Colonic mucosa (tissue), 4 donors: ENCODE measurements at regions of chr7 and their contacts with region 1.

Region 1: DNA sequence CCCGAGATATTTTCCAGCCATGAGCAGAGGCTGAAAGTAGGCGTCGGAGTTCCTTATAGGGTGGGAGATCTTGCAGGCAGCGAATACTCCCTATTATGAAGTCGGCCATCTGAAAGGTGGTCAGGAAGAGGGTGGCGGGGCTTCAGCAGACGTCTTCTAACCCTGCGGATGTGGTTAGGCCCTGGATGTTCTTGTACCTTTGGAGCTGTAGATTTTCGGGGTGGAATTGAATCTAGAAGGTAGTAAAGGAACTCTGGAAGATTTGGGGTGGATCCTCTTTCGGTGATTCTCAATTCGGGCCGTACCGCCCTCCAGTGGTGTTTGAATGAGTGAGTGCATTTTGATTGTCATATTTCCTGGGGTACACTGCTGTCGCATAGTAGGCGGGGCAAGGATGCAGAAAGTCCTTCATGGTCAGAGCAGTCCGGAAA is 635 bp downstream of the NUP205 start:
- DNase-seq: peak; percentile 76
- H3K4me3 ChIP-seq: peak overlapping the region; percentile 77
- H3K27ac ChIP-seq: peak overlapping the region; percentile 67
- H3K4me1 ChIP-seq: no peaks in the 10 kb centered on the region
- H3K27me3 ChIP-seq: no peaks in the 10 kb centered on the region
- CTCF ChIP-seq: peak; percentile 30

Region 2: DNA sequence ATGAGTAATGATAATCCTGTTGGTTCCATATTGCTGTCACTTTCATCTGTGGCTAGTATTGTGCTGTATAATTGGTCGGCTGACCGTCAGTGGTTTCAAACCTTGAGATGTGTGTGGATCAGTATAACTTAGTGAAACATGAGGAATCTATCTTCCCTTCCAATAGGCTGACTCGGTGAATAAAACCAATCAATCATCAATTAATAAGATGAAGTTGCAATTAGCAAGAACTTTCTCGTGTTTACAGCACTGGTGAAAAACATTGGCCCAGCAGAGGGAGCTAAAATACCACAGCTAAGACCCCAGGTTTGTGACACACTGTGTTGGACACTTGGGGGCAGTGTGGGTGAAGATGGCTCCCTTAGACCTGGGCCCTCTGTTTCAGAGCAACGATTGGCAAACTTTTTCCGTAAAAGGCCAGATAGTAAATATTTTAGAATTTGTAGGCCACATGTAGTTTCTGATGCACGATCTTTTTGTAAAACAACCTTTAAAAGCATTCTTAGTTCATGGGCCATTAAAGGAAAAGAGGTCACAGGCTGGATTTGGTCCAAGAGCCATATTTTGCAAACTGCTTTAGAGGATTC is 276.9 kb before region 1 on chr7:
- intact Hi-C with region 1: loop called (anchors 5 kb)
- DNase-seq: peak; percentile 86
- H3K4me3 ChIP-seq: no peak overlapping the region
- H3K27ac ChIP-seq: no peak overlapping the region
- H3K4me1 ChIP-seq: no peaks in the 10 kb centered on the region
- H3K27me3 ChIP-seq: peaks cover 4% of the 10 kb centered on the region
- CTCF ChIP-seq: peak; percentile 86

Region 3: DNA sequence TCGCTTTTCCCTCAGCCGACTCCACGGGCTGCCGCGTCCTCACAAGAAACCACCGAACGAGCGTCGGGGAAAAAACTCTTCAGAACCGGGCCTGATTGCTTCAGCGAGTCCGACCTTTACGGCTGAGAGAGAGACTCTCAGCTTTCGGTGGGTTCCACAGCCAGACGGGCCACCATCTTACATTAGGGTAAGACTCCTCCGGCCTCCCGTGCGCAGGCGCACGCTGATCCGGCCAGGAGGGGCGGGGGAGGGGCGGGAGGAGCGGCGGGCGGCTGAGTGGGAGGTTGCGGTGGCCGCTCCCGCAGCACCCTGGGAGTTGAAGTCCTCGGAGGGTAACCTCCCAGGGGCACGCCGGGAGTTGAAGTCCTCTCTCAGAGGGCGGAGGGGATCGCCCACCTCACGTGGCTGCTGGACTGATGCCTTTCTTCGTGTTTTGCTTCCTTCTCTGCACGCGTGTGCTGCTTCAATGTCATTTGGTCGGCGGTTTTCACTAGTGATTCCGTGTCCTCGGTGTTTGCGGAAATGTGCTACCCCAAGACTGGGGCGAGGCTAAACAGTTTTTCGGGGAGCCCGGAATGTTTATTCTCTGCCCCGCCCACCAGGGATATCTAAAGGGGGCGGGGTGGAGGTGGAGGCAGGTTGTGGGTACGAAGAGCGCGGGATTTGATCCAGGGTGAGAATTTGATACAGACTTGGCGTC is 48.3 kb before region 1 on chr7 and contains the start of gene CNOT4:
- intact Hi-C with region 1: loop called (anchors 5 kb)
- DNase-seq: peak; percentile 97
- H3K4me3 ChIP-seq: peak within 1 kb of the TSS; percentile 76
- H3K27ac ChIP-seq: peak within 1 kb of the TSS; percentile 89
- H3K4me1 ChIP-seq: no peaks in the 10 kb centered on the region
- H3K27me3 ChIP-seq: no peaks in the 10 kb centered on the region
- CTCF ChIP-seq: no peak
- total RNA-seq, gene CNOT4: 14.7 to 20.9 TPM

Region 4: GRCh38 chr7:135616136-135616535 is 57.8 kb after region 1 on chr7:
- intact Hi-C with region 1: loop called (anchors 10 kb)
- DNase-seq: no peak
- H3K4me3 ChIP-seq: no peak overlapping the region
- H3K27ac ChIP-seq: no peak overlapping the region
- H3K4me1 ChIP-seq: no peaks in the 10 kb centered on the region
- H3K27me3 ChIP-seq: no peaks in the 10 kb centered on the region
- CTCF ChIP-seq: no peak

Region 5: DNA sequence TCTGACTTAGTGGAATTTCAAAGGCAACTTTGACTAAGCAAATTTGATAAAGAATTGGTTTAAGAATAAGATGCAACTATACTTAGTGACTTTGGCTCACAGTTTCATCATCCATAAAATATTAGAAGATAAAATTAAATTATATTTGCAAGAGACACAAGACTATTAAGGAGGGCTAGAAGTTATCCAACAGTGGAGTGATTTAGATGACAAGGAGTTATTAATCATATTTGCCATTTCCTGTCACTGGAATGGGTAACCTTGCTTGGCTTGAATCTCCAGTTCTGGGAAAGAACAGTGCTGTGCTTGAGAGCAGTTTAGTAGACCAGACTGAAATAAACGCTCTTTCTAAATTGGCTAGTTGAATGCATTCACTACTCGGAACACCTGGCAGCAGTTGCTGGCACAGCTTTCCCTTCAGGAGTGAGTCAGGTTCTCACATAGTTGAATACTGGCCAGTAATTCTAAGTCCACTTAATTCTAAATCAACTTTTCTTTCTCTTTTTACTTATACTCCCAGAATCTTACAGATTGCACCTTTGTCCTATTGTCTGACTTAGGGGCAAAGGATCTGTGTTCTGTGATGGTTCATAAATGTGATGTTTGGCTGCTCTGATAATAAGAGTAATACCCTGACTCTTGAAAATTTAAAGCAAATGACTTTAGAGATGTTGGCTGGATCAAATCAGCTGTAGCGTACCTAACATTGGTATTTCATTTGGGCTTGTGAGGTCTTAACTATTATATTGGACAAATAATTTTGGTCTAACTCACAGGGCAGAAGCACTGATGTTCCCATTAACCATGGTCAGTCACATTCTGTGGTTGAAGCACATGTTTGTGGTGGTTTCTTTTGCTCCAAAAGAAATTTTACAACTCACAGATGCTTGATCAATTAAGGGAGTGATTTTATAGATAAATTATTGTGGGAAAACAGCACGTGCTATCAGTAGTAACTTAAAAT is 120.5 kb after region 1 on chr7:
- intact Hi-C with region 1: no loop called
- DNase-seq: no peak
- H3K4me3 ChIP-seq: no peak overlapping the region
- H3K27ac ChIP-seq: no peak overlapping the region
- H3K4me1 ChIP-seq: no peaks in the 10 kb centered on the region
- H3K27me3 ChIP-seq: no peaks in the 10 kb centered on the region
- CTCF ChIP-seq: no peak